ENCODE measurements at regions of chr3 and their contacts with region 1.

Region 1: DNA sequence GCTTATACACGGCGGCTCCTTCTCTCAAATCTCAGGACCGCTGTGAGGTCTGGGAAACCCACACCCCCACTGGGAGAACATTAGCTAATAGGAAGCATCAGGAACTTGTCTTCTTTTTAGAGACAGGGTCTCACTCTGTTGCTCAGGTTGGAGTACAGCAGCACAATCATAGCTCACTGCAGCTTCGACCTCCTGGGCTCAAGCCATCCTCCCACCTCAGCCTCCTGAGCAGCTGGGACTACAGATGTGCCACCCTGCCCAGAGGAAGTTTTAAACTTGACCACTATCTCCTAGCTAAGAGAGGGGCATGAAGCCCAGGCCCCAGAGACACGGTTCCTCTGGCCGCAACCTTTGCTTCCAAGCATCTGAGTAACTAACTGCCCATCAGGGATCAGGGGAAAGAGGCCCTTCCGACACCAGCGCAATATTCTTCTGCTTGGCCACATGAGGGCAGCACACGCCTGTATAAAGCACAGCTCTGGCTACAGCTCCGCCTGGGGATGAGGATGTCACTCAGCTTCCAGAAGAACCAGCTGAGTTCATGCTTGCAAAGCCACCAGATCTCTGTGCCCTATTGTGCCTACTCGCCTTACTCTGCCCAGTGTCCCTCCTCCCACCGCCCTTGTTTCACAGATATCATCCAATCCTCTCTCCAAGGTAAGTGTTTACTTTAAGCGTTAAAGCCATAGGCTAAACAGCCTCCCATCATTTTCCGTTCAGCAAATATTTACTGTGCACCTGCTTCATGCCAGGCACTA is 57.5 kb upstream of the SLC6A11 start:
- DNase-seq: no peak
- H3K4me3 ChIP-seq: no peak overlapping the region
- H3K27me3 ChIP-seq: no peaks in the 10 kb centered on the region
- CTCF ChIP-seq: peak; percentile 80

Region 2: DNA sequence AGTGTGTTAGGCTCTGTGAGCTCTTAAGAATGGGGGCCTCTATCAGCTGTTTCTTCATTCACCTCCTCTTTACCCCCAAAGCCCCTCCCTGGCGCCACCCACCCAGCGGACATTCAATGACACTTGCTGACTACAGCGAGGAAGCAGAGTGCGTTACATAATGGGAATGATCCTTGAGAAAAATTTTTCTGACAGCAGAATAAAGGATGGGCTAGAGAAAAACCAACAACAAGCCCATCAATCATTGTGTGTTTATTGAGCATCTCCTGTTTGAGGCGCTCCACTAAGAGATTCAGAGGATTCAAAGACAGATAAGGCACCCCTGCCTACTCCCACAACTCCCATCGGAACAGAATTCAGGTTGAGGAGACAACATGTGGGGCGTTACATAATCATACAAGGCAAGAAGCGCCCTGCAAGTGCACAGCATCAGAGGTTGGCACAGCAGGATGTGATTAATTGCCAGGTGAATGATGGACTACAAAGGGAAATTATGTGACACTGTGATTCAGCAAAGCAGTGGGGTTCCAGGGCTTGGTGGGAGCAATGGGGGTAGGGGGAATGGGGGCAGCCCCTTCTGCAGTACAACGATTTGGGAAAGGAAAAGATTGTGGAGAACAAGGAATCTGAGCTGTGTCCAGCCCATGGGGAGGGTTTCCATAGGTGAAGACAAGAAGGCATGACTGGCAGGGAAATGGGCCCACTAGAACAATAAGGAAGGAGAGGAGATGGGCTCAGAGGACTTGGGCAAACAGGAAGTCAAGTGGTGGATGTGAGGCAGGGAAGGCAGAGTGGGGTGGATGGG is 111.8 kb before region 1 on chr3:
- CTCF ChIA-PET with region 1: no interaction called
- POLR2A ChIA-PET with region 1: no interaction called
- DNase-seq: no peak
- H3K4me3 ChIP-seq: no peak overlapping the region
- H3K27me3 ChIP-seq: no peaks in the 10 kb centered on the region
- CTCF ChIP-seq: no peak

Region 3: GRCh38 chr3:10748040-10748439 is 10.4 kb before region 1 on chr3:
- CTCF ChIA-PET with region 1: interaction called, 20 read pairs
- POLR2A ChIA-PET with region 1: no interaction called
- DNase-seq: no peak
- H3K4me3 ChIP-seq: no peak overlapping the region
- H3K27me3 ChIP-seq: no peaks in the 10 kb centered on the region; the same call in 1 of the 2 replicates
- CTCF ChIP-seq: no peak